ENCODE measurements at regions of chr5 and their contacts with region 1.

Region 1: GRCh38 chr5:150632305-150633160 is 7.9 kb upstream of the SYNPO start:
- DNase-seq: no peak
- H3K4me3 ChIP-seq: no peak overlapping the region
- H3K27ac ChIP-seq: no peak overlapping the region
- H3K4me1 ChIP-seq: peaks cover 28% of the 10 kb centered on the region
- H3K27me3 ChIP-seq: no peaks in the 10 kb centered on the region
- CTCF ChIP-seq: no peak

Region 2: DNA sequence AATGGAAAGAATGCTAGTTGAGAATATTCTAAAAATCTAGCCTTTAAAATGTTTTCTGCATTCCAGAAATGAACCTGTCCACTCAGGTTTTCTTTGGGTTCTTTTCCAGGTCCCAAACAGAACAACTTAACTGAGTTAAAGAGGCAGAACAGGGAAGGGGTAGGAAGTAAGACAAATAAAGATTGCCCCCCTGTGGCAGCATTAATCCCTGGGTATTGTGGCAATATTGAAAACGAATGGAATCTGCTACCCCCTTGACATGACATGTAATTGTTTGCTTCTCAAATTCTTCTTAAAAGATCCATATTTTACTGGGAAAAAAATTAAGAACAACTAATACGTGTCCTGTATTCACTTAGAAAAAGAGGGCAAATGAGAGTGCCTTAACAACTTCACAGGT is 77.6 kb after region 1 on chr5:
- CTCF ChIA-PET with region 1: no interaction called
- dilution Hi-C with region 1: loop called (anchors 5 kb)
- in situ Hi-C with region 1: no loop called
- intact Hi-C with region 1: no loop called
- DNase-seq: no peak
- H3K4me3 ChIP-seq: no peak overlapping the region
- H3K27ac ChIP-seq: no peak overlapping the region
- H3K4me1 ChIP-seq: no peaks in the 10 kb centered on the region
- H3K27me3 ChIP-seq: no peaks in the 10 kb centered on the region
- CTCF ChIP-seq: peak; percentile 13 to 25

Region 3: DNA sequence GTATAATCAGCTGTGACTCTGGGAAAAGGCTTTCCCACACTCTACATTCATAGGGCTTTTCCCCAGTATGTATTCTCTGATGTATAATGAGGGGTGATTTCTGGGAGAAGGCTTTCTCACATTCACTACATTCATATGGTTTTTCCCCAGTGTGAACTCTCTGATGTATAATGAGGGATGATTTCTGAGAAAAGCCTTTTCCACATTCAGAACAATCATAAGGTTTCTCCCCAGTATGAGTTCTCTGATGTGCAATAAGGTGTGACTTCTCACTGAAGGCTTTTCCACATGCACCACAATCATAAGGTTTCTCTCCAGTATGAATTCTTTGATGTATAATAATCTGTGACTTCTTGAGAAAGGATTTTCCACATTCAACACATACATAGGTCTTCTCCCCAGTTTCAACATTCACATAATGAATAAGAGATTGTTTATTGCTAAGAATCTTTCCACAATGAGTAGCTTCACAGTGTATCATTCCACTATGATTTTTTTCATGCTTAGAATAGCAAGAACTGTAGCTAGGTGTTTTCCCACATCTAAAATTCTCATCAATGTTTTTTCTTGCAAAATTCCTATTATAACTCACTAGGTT is 298.9 kb after region 1 on chr5:
- CTCF ChIA-PET with region 1: no interaction called
- dilution Hi-C with region 1: no loop called
- in situ Hi-C with region 1: no loop called
- intact Hi-C with region 1: no loop called
- DNase-seq: no peak
- H3K4me3 ChIP-seq: no peak overlapping the region
- H3K27ac ChIP-seq: no peak overlapping the region
- H3K4me1 ChIP-seq: no peaks in the 10 kb centered on the region
- H3K27me3 ChIP-seq: no peaks in the 10 kb centered on the region
- CTCF ChIP-seq: no peak